Naive thymus-derived CD4-positive, alpha-beta T cell (primary cell): ENCODE measurements at regions of chr12 and their contacts with region 1.

Region 1: DNA sequence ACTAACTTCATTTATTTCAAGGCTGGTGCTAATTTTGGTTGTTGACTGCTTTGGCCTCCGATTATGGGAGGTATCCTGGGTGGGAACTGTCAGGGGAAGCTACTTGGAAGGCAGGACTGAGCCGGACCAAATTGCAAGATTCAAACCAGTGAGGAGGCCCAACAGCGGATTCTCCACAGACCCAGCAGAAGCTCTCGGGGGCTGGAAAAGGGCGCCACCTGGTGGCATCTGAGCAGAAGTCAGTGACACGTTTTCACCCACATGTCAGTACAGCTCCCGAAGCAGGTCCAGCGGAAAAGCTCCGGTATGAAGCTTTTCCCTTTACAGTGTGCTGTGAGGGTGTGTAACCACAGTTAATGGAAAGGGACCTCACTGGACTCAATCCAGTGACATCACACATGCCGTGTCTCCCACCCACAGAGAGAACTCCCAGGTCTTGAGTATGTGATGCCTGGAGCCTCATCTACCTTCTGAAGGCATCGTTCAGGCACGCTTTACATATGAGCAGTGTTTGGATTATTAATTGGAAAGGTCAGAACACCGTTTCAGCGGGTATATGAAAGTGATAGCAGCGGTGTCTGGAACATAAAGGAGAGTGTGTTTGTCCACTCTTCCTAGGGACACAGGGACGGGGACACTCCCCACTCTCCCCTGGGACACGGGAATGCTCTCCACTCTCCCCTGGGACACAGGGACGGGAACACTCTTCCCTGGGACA is 3.6 kb upstream of the P2RX2 start:
- DNase-seq: peak; percentile 59 to 84 (median 77)
- ATAC-seq: peak; percentile 89
- H3K4me3 ChIP-seq: no peak overlapping the region
- H3K4me3 Mint-ChIP-seq: peak overlapping the region in 2 of 10 donors; percentile 3 to 49
- H3K27ac ChIP-seq: no peak overlapping the region
- H3K27ac Mint-ChIP-seq: peak overlapping the region in 1 of 9 donors; percentile 19
- H3K4me1 ChIP-seq: peaks cover 0 to 12% of the 10 kb centered on the region in 2 donors
- H3K4me1 Mint-ChIP-seq: peaks cover 5 to 23% (median 18%) of the 10 kb centered on the region in 7 donors
- H3K27me3 ChIP-seq: peaks cover 4 to 19% of the 10 kb centered on the region in 2 donors
- H3K27me3 Mint-ChIP-seq: peaks cover 31 to 44% (median 40%) of the 10 kb centered on the region in 5 donors

Region 2: GRCh38 chr12:132218915-132219314 is 396.1 kb before region 1 on chr12:
- CTCF ChIA-PET with region 1: no interaction called
- POLR2A ChIA-PET with region 1: no interaction called
- intact Hi-C with region 1: loop called in 1 of 2 experiments (anchors 10 kb)
- DNase-seq: peak in 7 of 9 donors; percentile 40 to 67 (median 57)
- ATAC-seq: peak; percentile 66
- H3K4me3 ChIP-seq: no peak overlapping the region
- H3K4me3 Mint-ChIP-seq: no peak overlapping the region
- H3K27ac ChIP-seq: no peak overlapping the region
- H3K27ac Mint-ChIP-seq: peak overlapping the region in 3 of 9 donors; percentile 4 to 55 (median 38)
- H3K4me1 ChIP-seq: peaks cover 6 to 10% of the 10 kb centered on the region in 2 donors
- H3K4me1 Mint-ChIP-seq: peaks cover 8 to 24% (median 13%) of the 10 kb centered on the region in 7 donors
- H3K27me3 ChIP-seq: no peaks in the 10 kb centered on the region
- H3K27me3 Mint-ChIP-seq: peaks cover 0 to 12% (median 8%) of the 10 kb centered on the region in 5 donors

Region 3: GRCh38 chr12:132414634-132415326 is 200.2 kb before region 1 on chr12:
- CTCF ChIA-PET with region 1: interaction called, 15 read pairs
- POLR2A ChIA-PET with region 1: interaction called, 3 read pairs
- intact Hi-C with region 1: loop called (anchors 1 kb)
- DNase-seq: peak; percentile 54 to 82 (median 68)
- ATAC-seq: peak; percentile 92
- H3K4me3 ChIP-seq: no peak overlapping the region
- H3K4me3 Mint-ChIP-seq: peak overlapping the region in 4 of 10 donors; percentile 25 to 43 (median 35)
- H3K27ac ChIP-seq: no peak overlapping the region
- H3K27ac Mint-ChIP-seq: no peak overlapping the region
- H3K4me1 ChIP-seq: peaks cover 5 to 15% of the 10 kb centered on the region in 2 donors
- H3K4me1 Mint-ChIP-seq: peaks cover 0 to 5% (median 3%) of the 10 kb centered on the region in 7 donors
- H3K27me3 ChIP-seq: no peaks in the 10 kb centered on the region
- H3K27me3 Mint-ChIP-seq: peaks cover 0 to 9% (median 0%) of the 10 kb centered on the region in 5 donors

Region 4: GRCh38 chr12:132506328-132507160 is 108.5 kb before region 1 on chr12:
- CTCF ChIA-PET with region 1: no interaction called
- POLR2A ChIA-PET with region 1: no interaction called
- intact Hi-C with region 1: no loop called
- DNase-seq: peak; percentile 41 to 74 (median 65)
- ATAC-seq: peak; percentile 70
- H3K4me3 ChIP-seq: peak overlapping the region; percentile 35
- H3K4me3 Mint-ChIP-seq: peak overlapping the region; percentile 25 to 77 (median 70)
- H3K27ac ChIP-seq: peak overlapping the region; percentile 73
- H3K27ac Mint-ChIP-seq: peak overlapping the region; percentile 62 to 90 (median 86)
- H3K4me1 ChIP-seq: peaks cover 10 to 34% of the 10 kb centered on the region in 2 donors
- H3K4me1 Mint-ChIP-seq: peaks cover 30 to 61% (median 41%) of the 10 kb centered on the region in 7 donors
- H3K27me3 ChIP-seq: no peaks in the 10 kb centered on the region
- H3K27me3 Mint-ChIP-seq: no peaks in the 10 kb centered on the region

Region 5: GRCh38 chr12:132600048-132601032 is 14.7 kb before region 1 on chr12:
- CTCF ChIA-PET with region 1: no interaction called
- POLR2A ChIA-PET with region 1: no interaction called
- intact Hi-C with region 1: loop called in 1 of 2 experiments (anchors 1 kb)
- DNase-seq: peak in 5 of 9 donors; percentile 28 to 53 (median 38)
- ATAC-seq: peak; percentile 65
- H3K4me3 ChIP-seq: peak overlapping the region; percentile 48
- H3K4me3 Mint-ChIP-seq: peak overlapping the region; percentile 70 to 98 (median 82)
- H3K27ac ChIP-seq: no peak overlapping the region
- H3K27ac Mint-ChIP-seq: peak overlapping the region in 4 of 9 donors; percentile 13 to 85 (median 68)
- H3K4me1 ChIP-seq: peaks cover 5 to 6% of the 10 kb centered on the region in 2 donors
- H3K4me1 Mint-ChIP-seq: peaks cover 13 to 33% (median 26%) of the 10 kb centered on the region in 7 donors
- H3K27me3 ChIP-seq: no peaks in the 10 kb centered on the region
- H3K27me3 Mint-ChIP-seq: peaks cover 32 to 60% (median 43%) of the 10 kb centered on the region in 5 donors

Region 6: DNA sequence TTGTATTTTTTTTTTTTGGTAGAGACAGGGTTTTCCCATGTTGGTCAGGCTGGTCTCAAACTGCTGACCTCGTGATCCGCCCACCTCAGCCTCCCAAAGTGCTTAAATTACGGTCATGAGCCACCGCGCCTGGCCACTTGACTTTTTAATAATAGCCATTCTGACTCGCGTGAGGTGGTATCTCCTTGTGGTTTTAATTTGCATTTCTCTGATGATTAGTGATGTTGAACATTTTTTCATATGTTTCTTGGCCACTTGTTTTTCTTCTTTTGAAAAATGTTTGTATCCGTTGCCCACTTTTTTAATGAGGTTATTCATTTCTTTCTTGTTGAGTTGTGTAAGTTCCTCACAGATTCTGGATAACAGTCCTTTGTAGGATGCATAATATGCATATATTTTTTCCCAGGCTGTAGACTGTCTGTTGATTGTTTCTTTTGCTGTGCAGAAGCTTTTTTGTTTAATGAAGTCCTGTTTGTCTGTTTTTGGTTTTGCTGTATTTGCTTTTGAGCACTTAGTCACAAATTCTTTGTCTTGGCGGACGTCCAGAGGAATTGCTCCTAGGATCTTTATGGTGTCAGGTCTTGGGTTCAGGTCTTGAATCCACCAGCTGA is 85.3 kb after region 1 on chr12:
- CTCF ChIA-PET with region 1: no interaction called
- POLR2A ChIA-PET with region 1: no interaction called
- intact Hi-C with region 1: no loop called
- DNase-seq: no peak
- ATAC-seq: no peak
- H3K4me3 ChIP-seq: no peak overlapping the region
- H3K4me3 Mint-ChIP-seq: no peak overlapping the region
- H3K27ac ChIP-seq: no peak overlapping the region
- H3K27ac Mint-ChIP-seq: no peak overlapping the region
- H3K4me1 ChIP-seq: no peaks in the 10 kb centered on the region
- H3K4me1 Mint-ChIP-seq: peaks cover 0 to 7% (median 0%) of the 10 kb centered on the region in 7 donors
- H3K27me3 ChIP-seq: no peaks in the 10 kb centered on the region
- H3K27me3 Mint-ChIP-seq: no peaks in the 10 kb centered on the region